Caco-2 (cell line): ENCODE measurements at regions of chr13 and their contacts with region 1.

Region 1: GRCh38 chr13:40789275-40790133 is at the start of gene SLC25A15:
- DNase-seq: peak; percentile 90 to 96
- H3K4me3 ChIP-seq: peak within 1 kb of the TSS; percentile 98
- H3K4me3 Mint-ChIP-seq: peak within 1 kb of the TSS; percentile 77
- H3K27ac Mint-ChIP-seq: peak within 1 kb of the TSS; percentile 64
- H3K4me1 ChIP-seq: peaks cover 9% of the 10 kb centered on the region; the same call in 1 of the 2 replicates
- H3K4me1 Mint-ChIP-seq: peaks cover 14% of the 10 kb centered on the region
- H3K27me3 ChIP-seq: no peaks in the 10 kb centered on the region
- H3K27me3 Mint-ChIP-seq: no peaks in the 10 kb centered on the region
- CTCF ChIP-seq: peak; percentile 30 to 41
- total RNA-seq, gene SLC25A15: 22.6 and 27.4 TPM in 2 replicates

Region 2: GRCh38 chr13:40770934-40771618 is 18.4 kb before region 1 on chr13 and contains the start of gene MRPS31:
- CTCF ChIA-PET with region 1: no interaction called
- POLR2A ChIA-PET with region 1: interaction called, 3 read pairs
- intact Hi-C with region 1: loop called (anchors 2 kb)
- DNase-seq: peak; percentile 97 to 98
- H3K4me3 ChIP-seq: peak within 1 kb of the TSS; percentile 67
- H3K4me3 Mint-ChIP-seq: peak within 1 kb of the TSS; percentile 93
- H3K27ac Mint-ChIP-seq: peak within 1 kb of the TSS; percentile 88
- H3K4me1 ChIP-seq: peaks cover 22% of the 10 kb centered on the region
- H3K4me1 Mint-ChIP-seq: peaks cover 7% of the 10 kb centered on the region
- H3K27me3 ChIP-seq: no peaks in the 10 kb centered on the region
- H3K27me3 Mint-ChIP-seq: no peaks in the 10 kb centered on the region
- CTCF ChIP-seq: no peak
- total RNA-seq, gene MRPS31: 34.4 and 37.0 TPM in 2 replicates

Region 3: GRCh38 chr13:40801255-40802217 is 12.0 kb after region 1 on chr13:
- CTCF ChIA-PET with region 1: no interaction called
- POLR2A ChIA-PET with region 1: no interaction called
- intact Hi-C with region 1: loop called (anchors 1 kb)
- DNase-seq: peak in 1 of 2 experiments; percentile 28
- H3K4me3 ChIP-seq: no peak overlapping the region
- H3K4me3 Mint-ChIP-seq: no peak overlapping the region
- H3K27ac Mint-ChIP-seq: peak overlapping the region; percentile 17
- H3K4me1 ChIP-seq: peaks cover 4% of the 10 kb centered on the region; the same call in 1 of the 2 replicates
- H3K4me1 Mint-ChIP-seq: no peaks in the 10 kb centered on the region
- H3K27me3 ChIP-seq: no peaks in the 10 kb centered on the region
- H3K27me3 Mint-ChIP-seq: no peaks in the 10 kb centered on the region
- CTCF ChIP-seq: no peak

Region 4: DNA sequence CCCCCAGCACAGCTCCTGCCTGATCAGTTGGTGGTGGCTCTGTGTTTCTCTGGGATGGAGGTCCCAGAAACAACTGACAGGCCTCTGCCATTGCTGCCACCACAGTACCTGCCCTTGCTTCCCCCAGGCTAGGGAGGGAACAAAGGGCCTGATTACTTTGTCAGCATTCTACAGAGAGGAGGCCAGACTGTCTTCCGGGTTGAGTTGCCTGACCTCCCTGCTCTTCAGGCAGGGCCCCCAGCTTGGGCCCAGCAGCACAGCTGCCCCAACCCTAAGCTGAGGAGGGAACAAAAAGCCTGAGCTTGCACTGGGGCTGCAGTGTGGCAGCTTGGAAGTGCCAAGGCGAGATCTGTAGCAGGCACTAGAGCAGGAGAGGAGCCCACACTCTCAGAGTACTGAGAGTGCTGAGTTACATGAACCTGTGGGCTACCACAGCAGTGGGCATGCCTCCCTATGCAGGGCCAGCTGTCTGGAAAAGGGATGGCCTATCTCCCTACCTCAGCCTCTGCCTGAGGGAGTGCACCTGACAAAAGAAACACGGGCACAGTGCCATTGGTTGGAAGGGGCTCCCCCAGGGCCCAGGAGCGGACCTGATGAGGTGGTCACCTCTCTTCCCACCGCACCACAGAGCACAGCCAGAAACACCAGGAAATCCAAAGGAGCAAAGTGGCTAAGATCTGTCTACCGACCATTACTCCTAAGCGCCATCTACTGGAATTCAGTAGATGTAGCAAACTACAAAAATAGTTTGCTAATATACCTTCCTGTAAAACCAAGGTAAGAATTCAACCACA is 24.4 kb after region 1 on chr13:
- CTCF ChIA-PET with region 1: interaction called, 8 read pairs
- POLR2A ChIA-PET with region 1: no interaction called
- intact Hi-C with region 1: loop called (anchors 2 kb)
- DNase-seq: peak in 1 of 2 experiments; percentile 19
- H3K4me3 ChIP-seq: no peak overlapping the region
- H3K4me3 Mint-ChIP-seq: no peak overlapping the region
- H3K27ac Mint-ChIP-seq: no peak overlapping the region
- H3K4me1 ChIP-seq: no peaks in the 10 kb centered on the region; the same call in 1 of the 2 replicates
- H3K4me1 Mint-ChIP-seq: no peaks in the 10 kb centered on the region
- H3K27me3 ChIP-seq: no peaks in the 10 kb centered on the region
- H3K27me3 Mint-ChIP-seq: no peaks in the 10 kb centered on the region
- CTCF ChIP-seq: peak; percentile 58 to 67

Region 5: GRCh38 chr13:40922437-40923040 is 133.0 kb after region 1 on chr13:
- CTCF ChIA-PET with region 1: interaction called, 13 read pairs
- POLR2A ChIA-PET with region 1: interaction called, 7 read pairs
- intact Hi-C with region 1: loop called (anchors 1 kb)
- DNase-seq: peak; percentile 80 to 87
- H3K4me3 ChIP-seq: peak overlapping the region; percentile 76
- H3K4me3 Mint-ChIP-seq: peak overlapping the region; percentile 99
- H3K27ac Mint-ChIP-seq: peak overlapping the region; percentile 95
- H3K4me1 ChIP-seq: peaks cover 9% of the 10 kb centered on the region; the same call in 1 of the 2 replicates
- H3K4me1 Mint-ChIP-seq: peaks cover 15% of the 10 kb centered on the region
- H3K27me3 ChIP-seq: no peaks in the 10 kb centered on the region
- H3K27me3 Mint-ChIP-seq: no peaks in the 10 kb centered on the region
- CTCF ChIP-seq: no peak

Region 6: DNA sequence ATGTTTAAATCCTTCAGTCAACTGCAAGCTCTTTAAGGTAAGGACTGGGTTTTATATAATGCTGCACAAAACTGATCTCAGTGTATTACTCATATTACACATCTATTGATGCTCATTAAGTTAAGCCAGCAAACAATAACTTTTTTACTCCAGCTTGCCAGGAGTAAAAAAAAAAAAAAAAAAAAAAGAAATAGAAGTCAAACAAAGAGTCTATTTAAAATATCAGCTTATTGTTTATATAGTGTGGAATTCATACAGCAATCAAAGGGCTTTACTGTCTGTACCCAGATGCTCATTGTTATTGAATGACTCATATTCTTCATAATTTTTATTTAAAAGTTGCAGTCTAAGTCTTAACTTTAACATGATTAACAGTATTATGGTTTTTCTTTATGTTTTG is 426.7 kb after region 1 on chr13:
- CTCF ChIA-PET with region 1: no interaction called
- POLR2A ChIA-PET with region 1: interaction called, 11 read pairs
- intact Hi-C with region 1: loop called (anchors 10 kb)
- DNase-seq: no peak
- H3K4me3 ChIP-seq: no peak overlapping the region
- H3K4me3 Mint-ChIP-seq: no peak overlapping the region
- H3K27ac Mint-ChIP-seq: no peak overlapping the region
- H3K4me1 ChIP-seq: peaks cover 14% of the 10 kb centered on the region
- H3K4me1 Mint-ChIP-seq: peaks cover 8% of the 10 kb centered on the region
- H3K27me3 ChIP-seq: no peaks in the 10 kb centered on the region
- H3K27me3 Mint-ChIP-seq: no peaks in the 10 kb centered on the region
- CTCF ChIP-seq: no peak

Region 7: GRCh38 chr13:41222259-41222852 is 432.9 kb after region 1 on chr13:
- CTCF ChIA-PET with region 1: no interaction called
- POLR2A ChIA-PET with region 1: no interaction called
- intact Hi-C with region 1: loop called (anchors 10 kb)
- DNase-seq: peak; percentile 50 to 68
- H3K4me3 ChIP-seq: no peak overlapping the region
- H3K4me3 Mint-ChIP-seq: no peak overlapping the region
- H3K27ac Mint-ChIP-seq: no peak overlapping the region
- H3K4me1 ChIP-seq: peaks cover 14% of the 10 kb centered on the region
- H3K4me1 Mint-ChIP-seq: peaks cover 8% of the 10 kb centered on the region
- H3K27me3 ChIP-seq: no peaks in the 10 kb centered on the region
- H3K27me3 Mint-ChIP-seq: no peaks in the 10 kb centered on the region
- CTCF ChIP-seq: peak; percentile 70 to 76